ENCODE measurements at regions of chr21 and their contacts with region 1.

Region 1: DNA sequence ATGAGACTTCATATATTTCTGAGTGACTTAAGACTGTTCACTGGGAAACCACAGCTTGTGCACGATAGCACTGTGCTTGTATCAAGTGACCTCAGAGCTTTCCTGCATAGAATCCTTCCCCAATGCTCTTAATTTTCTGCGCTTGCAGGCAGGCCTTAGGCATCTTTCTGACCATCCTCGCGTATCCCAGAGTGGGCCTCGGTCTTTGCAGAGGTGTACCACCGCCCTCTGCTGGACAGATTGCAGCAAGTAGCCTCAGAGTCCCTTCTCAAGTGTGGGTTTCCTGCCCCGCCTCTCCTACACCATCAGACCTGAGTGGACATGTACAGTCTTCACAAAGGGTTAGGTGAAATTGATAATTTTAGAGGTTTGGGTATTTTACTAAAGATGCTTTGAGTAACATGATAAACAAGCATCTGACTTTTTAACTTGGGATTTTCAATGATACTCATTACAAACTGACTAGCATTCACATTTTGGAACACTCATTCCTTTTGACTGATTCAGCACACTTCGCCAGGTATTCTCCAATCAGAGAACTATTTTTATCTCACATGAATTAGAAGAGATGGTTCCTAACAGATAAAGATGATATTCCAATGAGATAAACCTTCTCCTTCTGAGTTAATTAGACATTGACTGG is 246.5 kb upstream of the USP25 start:
- DNase-seq: peak; percentile 94
- H3K4me3 ChIP-seq: no peak overlapping the region
- H3K27ac ChIP-seq: no peak overlapping the region
- H3K4me1 ChIP-seq: peaks cover 0 to 6% (median 0%) of the 10 kb centered on the region in 4 donors
- H3K27me3 ChIP-seq: no peaks in the 10 kb centered on the region
- CTCF ChIP-seq: peak; percentile 79 to 92 (median 85)
- EP300 ChIP-seq: no peak
- POLR2A ChIP-seq: no peak

Region 2: GRCh38 chr21:14259747-14260146 is 1223.5 kb before region 1 on chr21:
- intact Hi-C with region 1: loop called (anchors 5 kb)
- DNase-seq: no peak
- H3K4me3 ChIP-seq: no peak overlapping the region
- H3K27ac ChIP-seq: no peak overlapping the region
- H3K4me1 ChIP-seq: no peaks in the 10 kb centered on the region
- H3K27me3 ChIP-seq: no peaks in the 10 kb centered on the region
- CTCF ChIP-seq: peak in 3 of 4 experiments; percentile 25 to 60 (median 58)
- EP300 ChIP-seq: no peak
- POLR2A ChIP-seq: no peak

Region 3: DNA sequence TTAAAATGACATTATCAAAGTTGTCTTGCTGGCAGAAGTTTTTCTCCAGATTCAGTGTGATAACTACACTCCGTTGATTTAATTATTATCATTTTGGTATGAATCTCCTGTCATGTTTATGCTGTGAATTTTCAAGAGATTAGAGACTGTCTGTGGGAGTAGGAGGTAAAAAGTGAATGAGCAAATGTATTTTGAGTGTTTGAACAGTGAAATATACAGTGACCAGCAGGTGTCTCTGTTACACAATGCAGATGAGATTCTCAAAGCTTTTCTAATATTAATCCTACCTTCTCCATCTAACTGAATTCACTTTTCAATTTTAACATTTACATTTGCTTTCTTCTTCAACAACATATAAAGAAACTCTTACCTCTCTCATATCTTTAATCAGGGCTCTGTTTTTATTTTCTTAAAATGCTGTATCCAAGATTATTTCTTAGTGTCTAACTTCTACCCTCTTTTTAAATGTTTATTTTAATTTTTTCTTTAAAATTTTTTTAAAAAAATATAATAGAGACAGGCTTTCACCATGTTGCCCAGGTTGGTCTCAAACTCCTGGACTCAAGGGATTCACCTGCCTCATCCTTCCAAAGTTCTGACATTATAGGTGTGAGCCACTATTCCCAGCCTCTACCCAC is 1079.5 kb before region 1 on chr21:
- intact Hi-C with region 1: loop called (anchors 5 kb)
- DNase-seq: no peak
- H3K4me3 ChIP-seq: no peak overlapping the region
- H3K27ac ChIP-seq: no peak overlapping the region
- H3K4me1 ChIP-seq: no peaks in the 10 kb centered on the region
- H3K27me3 ChIP-seq: no peaks in the 10 kb centered on the region
- CTCF ChIP-seq: peak; percentile 19 to 50 (median 32)
- EP300 ChIP-seq: no peak
- POLR2A ChIP-seq: no peak

Region 4: DNA sequence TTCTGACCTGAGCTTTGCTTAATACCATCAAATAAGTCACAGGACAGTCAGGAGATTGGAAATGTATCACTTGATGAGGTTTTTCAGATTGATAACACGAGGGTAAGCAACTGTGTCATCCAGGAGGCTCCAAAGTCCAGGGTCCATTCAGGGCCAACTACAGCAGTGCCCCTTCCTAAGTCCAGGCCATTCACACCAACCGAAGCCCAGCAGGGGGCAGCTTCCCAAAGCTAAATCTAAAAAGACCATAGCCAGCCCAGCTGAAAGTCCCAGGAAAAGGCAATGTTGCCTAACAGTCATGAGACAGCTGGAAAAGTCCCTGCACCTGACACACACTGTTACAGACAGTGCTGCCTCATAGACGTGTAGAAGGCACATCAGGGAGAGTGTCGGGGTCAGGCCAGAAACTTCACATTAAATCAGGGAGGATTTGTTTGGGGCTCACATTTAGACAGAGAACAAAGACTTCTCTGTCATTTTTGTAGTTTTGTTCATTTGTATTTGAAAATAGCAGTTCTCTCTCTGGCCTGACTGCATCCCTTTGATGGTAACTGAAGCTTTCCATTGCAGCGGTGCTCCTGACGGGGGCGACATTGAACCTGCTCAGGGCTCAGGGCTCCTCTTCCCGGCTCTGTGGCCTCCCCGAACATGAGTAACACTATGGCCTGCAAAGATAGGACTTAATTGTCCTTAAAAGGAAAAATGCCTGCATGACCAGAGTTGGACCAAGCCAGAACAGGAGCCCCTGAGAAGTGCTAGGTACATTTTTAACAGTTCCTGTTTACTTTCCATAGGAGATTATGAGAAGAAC is 618.8 kb before region 1 on chr21:
- intact Hi-C with region 1: loop called (anchors 1 kb)
- DNase-seq: peak; percentile 89
- H3K4me3 ChIP-seq: no peak overlapping the region
- H3K27ac ChIP-seq: peak overlapping the region; percentile 7 to 59 (median 34)
- H3K4me1 ChIP-seq: peaks cover 0 to 40% (median 19%) of the 10 kb centered on the region in 4 donors
- H3K27me3 ChIP-seq: no peaks in the 10 kb centered on the region
- CTCF ChIP-seq: peak; percentile 11 to 54 (median 40)
- EP300 ChIP-seq: no peak
- POLR2A ChIP-seq: no peak

Region 5: GRCh38 chr21:15408089-15408488 is 75.2 kb before region 1 on chr21:
- intact Hi-C with region 1: no loop called
- DNase-seq: no peak
- H3K4me3 ChIP-seq: no peak overlapping the region
- H3K27ac ChIP-seq: no peak overlapping the region
- H3K4me1 ChIP-seq: no peaks in the 10 kb centered on the region
- H3K27me3 ChIP-seq: no peaks in the 10 kb centered on the region
- CTCF ChIP-seq: no peak
- EP300 ChIP-seq: no peak
- POLR2A ChIP-seq: no peak

Region 6: GRCh38 chr21:15534450-15534886 is 51.2 kb after region 1 on chr21:
- intact Hi-C with region 1: no loop called
- DNase-seq: no peak
- H3K4me3 ChIP-seq: no peak overlapping the region
- H3K27ac ChIP-seq: no peak overlapping the region
- H3K4me1 ChIP-seq: no peaks in the 10 kb centered on the region
- H3K27me3 ChIP-seq: no peaks in the 10 kb centered on the region
- CTCF ChIP-seq: no peak
- EP300 ChIP-seq: no peak
- POLR2A ChIP-seq: no peak

Measured in sigmoid colon (tissue), 7 donors.